ENCODE measurements at regions of chr19 and their contacts with region 1.

Region 1: DNA sequence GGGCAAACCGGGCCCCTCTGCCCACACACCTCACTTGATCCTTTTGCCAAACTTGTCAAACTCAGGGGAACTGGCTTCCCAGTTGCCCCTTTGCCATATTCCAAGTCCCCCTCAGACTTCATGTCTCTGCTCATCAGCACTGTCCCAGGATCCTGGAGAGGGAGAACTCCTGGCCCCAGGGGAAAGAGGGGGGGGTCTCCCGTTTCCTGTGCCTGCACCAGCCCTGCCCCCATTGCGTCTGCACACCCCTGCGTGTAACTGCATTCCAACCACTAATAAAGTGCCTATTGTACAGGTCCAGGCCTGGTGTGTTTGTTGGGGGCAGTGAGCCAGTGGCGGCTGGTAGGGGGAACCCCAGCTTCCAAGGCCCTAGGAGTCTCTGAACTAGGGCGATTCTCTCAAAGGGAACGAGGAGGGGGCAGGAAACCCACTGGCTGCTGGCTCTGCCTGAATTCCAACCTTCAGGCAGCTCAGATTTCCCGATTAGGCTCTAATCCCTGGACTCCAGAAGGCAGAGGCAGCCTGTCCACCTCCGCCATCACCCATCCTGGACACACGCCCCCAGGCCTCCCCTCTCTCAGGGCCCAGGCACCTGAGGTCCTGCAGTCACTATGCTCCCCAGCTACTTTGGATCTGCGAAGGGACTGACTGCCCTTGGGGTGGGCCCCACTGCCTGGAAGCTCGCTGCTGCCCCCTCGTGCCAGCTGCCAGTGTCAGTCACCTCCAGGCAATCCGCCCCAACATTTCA is 9.7 kb upstream of the ILF3 start:
- DNase-seq: peak; percentile 90
- ATAC-seq: peak; percentile 90
- H3K4me3 Mint-ChIP-seq: no peak overlapping the region
- H3K27ac Mint-ChIP-seq: peak overlapping the region; percentile 90
- H3K4me1 Mint-ChIP-seq: peaks cover 47% of the 10 kb centered on the region
- H3K27me3 Mint-ChIP-seq: no peaks in the 10 kb centered on the region
- CTCF ChIP-seq: peak; percentile 92

Region 2: DNA sequence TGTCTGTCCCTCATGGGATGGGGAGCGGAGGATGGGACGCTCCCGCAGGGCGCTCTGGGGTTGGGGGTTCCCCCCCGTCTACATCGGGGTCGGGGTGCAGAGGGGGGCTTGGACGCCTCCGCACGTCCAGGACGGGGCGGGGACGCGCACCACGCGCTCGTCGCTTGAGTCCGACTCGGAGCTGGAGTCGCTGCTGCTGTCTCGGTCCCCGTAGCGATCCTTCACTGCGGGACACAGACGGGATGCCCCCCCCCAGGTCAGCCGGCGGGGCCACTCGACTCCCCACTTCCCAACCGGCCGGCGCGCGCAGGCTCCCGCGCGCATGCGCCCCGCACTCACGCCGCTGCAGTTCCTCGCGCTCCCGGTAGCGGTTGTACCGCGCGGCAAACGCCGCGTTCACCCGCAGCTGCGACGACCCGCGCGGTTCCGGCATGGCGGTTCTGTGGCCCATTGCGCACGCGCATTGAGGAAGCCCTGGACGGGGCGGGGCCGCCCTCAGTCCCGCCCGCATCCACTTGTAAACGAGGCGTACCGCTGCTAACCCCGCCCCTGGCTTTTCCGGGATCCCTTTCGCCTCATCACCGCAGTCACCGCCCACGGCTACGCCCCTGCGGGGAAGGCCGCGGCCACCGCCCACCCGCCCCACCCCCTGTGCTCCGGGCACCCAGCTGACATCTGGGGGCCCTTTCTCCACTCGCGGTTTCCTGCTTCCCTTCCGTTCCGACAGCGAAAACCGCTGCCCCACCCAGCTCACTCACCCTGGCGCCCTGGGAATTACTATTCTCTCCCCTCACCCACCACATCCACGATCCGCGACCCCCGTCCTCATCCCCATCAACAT is 78.6 kb before region 1 on chr19 and contains the start of gene KRI1:
- CTCF ChIA-PET with region 1: interaction called, 71 read pairs
- POLR2A ChIA-PET with region 1: interaction called, 3 read pairs
- intact Hi-C with region 1: no loop called
- DNase-seq: peak; percentile 99
- ATAC-seq: peak; percentile 43
- H3K4me3 Mint-ChIP-seq: peak within 1 kb of the TSS; percentile 86
- H3K27ac Mint-ChIP-seq: peak within 1 kb of the TSS; percentile 92
- H3K4me1 Mint-ChIP-seq: peaks cover 37% of the 10 kb centered on the region
- H3K27me3 Mint-ChIP-seq: no peaks in the 10 kb centered on the region
- CTCF ChIP-seq: peak; percentile 33
- total RNA-seq, gene KRI1: 50.0 to 58.3 TPM

Region 3: DNA sequence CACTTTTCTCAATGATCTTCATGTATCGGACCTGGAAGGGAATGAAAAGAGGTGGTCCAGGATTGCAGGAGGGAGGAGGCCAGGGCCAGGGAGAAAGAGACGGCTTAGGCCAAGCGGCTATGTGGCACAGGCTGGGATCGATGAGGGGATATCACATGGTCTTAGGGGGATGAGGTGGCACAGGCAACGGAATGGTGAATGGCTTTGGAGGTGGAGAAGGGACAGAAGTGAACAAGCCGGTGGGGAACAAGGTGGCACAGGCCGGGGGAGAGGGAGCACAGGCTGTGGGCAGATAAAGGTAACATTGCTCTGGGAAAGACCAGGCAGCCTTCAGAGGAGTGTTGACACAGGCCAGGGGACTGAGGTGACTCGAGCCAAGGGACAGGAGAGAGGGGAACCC is 70.0 kb before region 1 on chr19:
- CTCF ChIA-PET with region 1: interaction called, 409 read pairs
- POLR2A ChIA-PET with region 1: interaction called, 24 read pairs
- intact Hi-C with region 1: no loop called
- DNase-seq: no peak
- ATAC-seq: no peak
- H3K4me3 Mint-ChIP-seq: no peak overlapping the region
- H3K27ac Mint-ChIP-seq: no peak overlapping the region
- H3K4me1 Mint-ChIP-seq: peaks cover 7% of the 10 kb centered on the region
- H3K27me3 Mint-ChIP-seq: no peaks in the 10 kb centered on the region
- CTCF ChIP-seq: no peak

Region 4: GRCh38 chr19:10593820-10594637 is 50.4 kb before region 1 on chr19:
- CTCF ChIA-PET with region 1: interaction called, 12 read pairs
- POLR2A ChIA-PET with region 1: no interaction called
- intact Hi-C with region 1: no loop called
- DNase-seq: no peak
- ATAC-seq: no peak
- H3K4me3 Mint-ChIP-seq: no peak overlapping the region
- H3K27ac Mint-ChIP-seq: peak overlapping the region; percentile 73
- H3K4me1 Mint-ChIP-seq: peaks cover 22% of the 10 kb centered on the region
- H3K27me3 Mint-ChIP-seq: no peaks in the 10 kb centered on the region
- CTCF ChIP-seq: no peak

Region 5: GRCh38 chr19:10602330-10603083 is 41.9 kb before region 1 on chr19:
- CTCF ChIA-PET with region 1: interaction called, 11 read pairs
- POLR2A ChIA-PET with region 1: interaction called, 23 read pairs
- intact Hi-C with region 1: loop called (anchors 5 kb)
- DNase-seq: peak; percentile 93
- ATAC-seq: peak; percentile 86
- H3K4me3 Mint-ChIP-seq: peak overlapping the region; percentile 96
- H3K27ac Mint-ChIP-seq: peak overlapping the region; percentile 96
- H3K4me1 Mint-ChIP-seq: peaks cover 21% of the 10 kb centered on the region
- H3K27me3 Mint-ChIP-seq: no peaks in the 10 kb centered on the region
- CTCF ChIP-seq: no peak

Region 6: GRCh38 chr19:10612491-10613119 is 31.8 kb before region 1 on chr19:
- CTCF ChIA-PET with region 1: interaction called, 12 read pairs
- POLR2A ChIA-PET with region 1: interaction called, 3 read pairs
- intact Hi-C with region 1: no loop called
- DNase-seq: no peak
- ATAC-seq: no peak
- H3K4me3 Mint-ChIP-seq: no peak overlapping the region
- H3K27ac Mint-ChIP-seq: peak overlapping the region; percentile 5
- H3K4me1 Mint-ChIP-seq: peaks cover 28% of the 10 kb centered on the region
- H3K27me3 Mint-ChIP-seq: no peaks in the 10 kb centered on the region
- CTCF ChIP-seq: no peak

Region 7: DNA sequence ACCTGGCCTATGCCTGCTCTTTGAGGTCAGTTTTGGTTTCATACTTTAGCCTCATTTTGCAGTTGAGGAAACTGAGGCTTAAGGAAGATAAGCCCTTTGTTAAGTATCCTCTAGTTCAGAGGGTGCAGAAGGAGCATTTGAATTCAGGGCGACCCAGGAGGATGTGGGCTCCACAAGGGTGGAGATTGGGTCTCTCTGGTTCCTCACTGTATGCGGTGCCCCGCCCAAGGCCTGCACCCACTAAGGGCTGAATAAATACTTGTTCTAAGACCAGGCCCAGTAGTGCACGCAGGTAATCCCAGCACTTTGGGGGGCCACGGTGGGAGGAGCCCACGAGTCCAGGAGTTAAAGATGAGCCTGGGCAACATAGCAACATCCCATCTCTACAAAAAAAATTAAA is 19.8 kb before region 1 on chr19:
- CTCF ChIA-PET with region 1: interaction called, 30 read pairs
- POLR2A ChIA-PET with region 1: interaction called, 6 read pairs
- intact Hi-C with region 1: no loop called
- DNase-seq: no peak
- ATAC-seq: peak; percentile 37
- H3K4me3 Mint-ChIP-seq: no peak overlapping the region
- H3K27ac Mint-ChIP-seq: peak overlapping the region; percentile 46
- H3K4me1 Mint-ChIP-seq: peaks cover 38% of the 10 kb centered on the region
- H3K27me3 Mint-ChIP-seq: no peaks in the 10 kb centered on the region
- CTCF ChIP-seq: no peak

Region 8: DNA sequence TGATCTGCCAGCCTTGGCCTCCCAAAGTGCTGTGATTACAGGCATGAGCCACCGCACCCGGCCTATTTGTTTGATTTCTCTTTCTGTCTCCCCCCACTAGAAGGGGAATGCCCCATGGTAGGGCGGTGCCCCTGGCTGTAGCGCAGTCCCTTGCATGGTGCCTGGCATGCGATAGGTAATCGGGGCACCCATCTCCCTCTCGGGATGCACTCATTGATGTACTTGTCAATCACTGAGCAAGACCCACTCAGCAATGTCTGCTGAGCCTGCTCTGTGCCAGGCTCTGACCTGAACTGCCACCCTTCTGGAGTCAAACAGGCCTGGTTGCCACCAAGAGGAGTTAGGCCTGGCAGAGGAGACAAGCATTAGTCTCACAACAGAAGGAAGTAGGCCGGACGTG is 93.3 kb after region 1 on chr19:
- CTCF ChIA-PET with region 1: no interaction called
- POLR2A ChIA-PET with region 1: no interaction called
- intact Hi-C with region 1: no loop called
- DNase-seq: no peak
- ATAC-seq: no peak
- H3K4me3 Mint-ChIP-seq: no peak overlapping the region
- H3K27ac Mint-ChIP-seq: peak overlapping the region; percentile 32
- H3K4me1 Mint-ChIP-seq: peaks cover 45% of the 10 kb centered on the region
- H3K27me3 Mint-ChIP-seq: no peaks in the 10 kb centered on the region
- CTCF ChIP-seq: no peak